ENCODE measurements at regions of chr4 and their contacts with region 1.

Region 1: DNA sequence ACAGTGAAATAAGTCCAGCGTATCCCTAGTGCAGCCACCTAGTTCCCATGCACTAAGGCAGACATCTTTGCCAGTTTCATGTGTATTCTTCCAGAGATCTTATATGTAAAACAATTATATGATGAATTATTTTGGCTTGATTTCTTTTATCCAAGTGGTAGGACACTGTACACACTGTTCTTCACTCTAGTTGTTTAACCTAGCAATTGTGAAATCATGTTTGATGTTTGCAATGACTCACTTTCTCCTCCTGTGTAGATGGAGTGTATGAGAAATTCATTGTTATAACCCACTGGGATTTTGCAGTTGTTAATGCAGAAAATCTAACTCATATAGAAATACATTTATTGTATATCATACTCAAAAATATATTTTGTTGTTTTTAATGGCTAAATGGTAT is 17.5 kb upstream of the TBC1D1 start:
- DNase-seq: no peak
- ATAC-seq: peak; percentile 48

Region 2: DNA sequence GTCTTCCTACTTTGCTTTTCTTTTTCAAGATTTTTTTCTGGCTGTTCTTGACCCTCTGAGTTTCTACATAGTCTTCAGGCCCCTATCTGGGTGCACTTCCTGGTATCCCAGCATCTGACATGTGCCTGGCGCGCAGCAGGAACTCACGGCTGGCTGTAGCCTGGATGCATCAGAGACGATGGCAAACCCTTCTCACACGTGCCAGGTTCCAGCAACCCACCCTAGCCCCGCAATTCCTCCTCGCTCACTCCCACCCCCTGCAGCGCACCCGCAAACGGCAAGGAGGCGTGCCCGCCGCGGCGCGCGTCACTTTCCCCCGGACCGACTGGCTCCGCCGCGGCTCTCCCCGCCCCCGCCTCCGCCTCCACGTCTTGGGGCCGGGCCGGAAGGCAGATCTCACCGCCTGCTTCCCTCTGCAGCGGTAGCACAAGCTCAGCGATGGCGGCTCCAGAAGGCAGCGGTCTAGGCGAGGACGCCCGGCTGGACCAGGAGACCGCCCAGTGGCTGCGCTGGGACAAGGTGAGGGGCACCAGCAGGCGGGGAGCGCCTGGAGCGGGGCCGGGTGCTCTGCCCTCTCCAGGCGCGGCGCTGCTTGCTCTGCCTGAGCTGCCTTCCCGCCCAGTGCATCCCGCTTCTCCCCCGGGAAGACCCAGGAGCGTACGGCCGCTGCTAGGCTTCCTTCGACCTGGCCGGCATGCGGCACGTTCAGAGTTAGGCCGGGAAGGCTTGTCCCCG is 46.9 kb before region 1 on chr4 and contains the start of gene PGM2:
- intact Hi-C with region 1: loop called in 1 of 2 experiments (anchors 10 kb)
- DNase-seq: peak; percentile 89 to 94
- ATAC-seq: peak; percentile 96
- total RNA-seq, gene PGM2: 28.2 to 29.8 TPM

Region 3: GRCh38 chr4:38004062-38004461 is 130.7 kb after region 1 on chr4:
- intact Hi-C with region 1: no loop called
- DNase-seq: no peak
- ATAC-seq: no peak

Region 4: DNA sequence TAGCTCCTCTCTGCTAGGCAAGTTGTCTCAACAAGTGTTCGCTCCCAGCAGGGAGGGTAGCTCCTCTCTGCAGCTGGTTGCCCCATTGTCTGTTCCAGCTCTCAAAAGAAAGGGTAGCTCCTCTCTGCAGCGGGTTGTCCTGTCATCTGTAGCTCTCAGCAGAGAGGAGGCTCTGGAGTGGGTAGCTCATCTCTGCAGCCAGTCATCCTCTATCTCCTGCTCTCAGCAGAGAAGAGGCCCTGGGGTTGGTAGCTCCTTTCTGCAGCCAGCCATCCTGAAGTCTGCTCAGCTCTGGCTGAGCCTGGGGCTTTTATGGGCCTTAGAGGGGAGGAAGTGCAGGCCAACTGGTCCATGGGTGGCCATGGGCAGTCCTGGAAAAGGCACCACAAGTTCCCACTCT is 429.5 kb after region 1 on chr4:
- intact Hi-C with region 1: no loop called
- DNase-seq: no peak
- ATAC-seq: no peak